A673 (cell line): ENCODE measurements at regions of chr18 and their contacts with region 1.

Region 1: DNA sequence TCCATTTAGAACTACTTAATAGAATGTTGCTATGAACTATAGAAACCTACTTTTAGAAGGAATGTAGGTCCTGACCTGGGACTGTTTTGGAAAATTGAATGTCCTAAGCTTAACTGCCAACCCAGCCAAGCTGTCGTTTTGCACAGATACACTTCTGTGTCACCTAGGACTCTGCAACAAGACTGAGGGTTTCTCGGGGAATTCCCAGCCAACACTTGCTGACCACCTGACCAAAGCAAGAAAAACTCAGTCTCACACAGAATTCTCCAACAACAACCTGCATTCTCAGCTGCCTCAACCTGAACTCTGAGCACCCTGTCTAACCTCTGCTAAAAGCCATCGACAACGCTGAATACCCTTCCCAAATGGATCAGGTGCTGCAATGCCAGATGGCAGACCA is 128.2 kb downstream of the SS18 start:
- DNase-seq: no peak
- H3K4me3 ChIP-seq: no peak overlapping the region
- H3K27ac ChIP-seq: no peak overlapping the region
- H3K4me1 ChIP-seq: no peaks in the 10 kb centered on the region
- H3K27me3 ChIP-seq: no peaks in the 10 kb centered on the region
- CTCF ChIP-seq: no peak

Region 2: GRCh38 chr18:25915907-25916306 is 46.3 kb before region 1 on chr18:
- CTCF ChIA-PET with region 1: no interaction called
- POLR2A ChIA-PET with region 1: no interaction called
- intact Hi-C with region 1: loop called (anchors 5 kb)
- DNase-seq: no peak
- H3K4me3 ChIP-seq: no peak overlapping the region
- H3K27ac ChIP-seq: no peak overlapping the region
- H3K4me1 ChIP-seq: no peaks in the 10 kb centered on the region
- H3K27me3 ChIP-seq: no peaks in the 10 kb centered on the region
- CTCF ChIP-seq: peak; percentile 24; the same call in 1 of the 2 replicates